ENCODE measurements at regions of chr1 and their contacts with region 1.

Region 1: DNA sequence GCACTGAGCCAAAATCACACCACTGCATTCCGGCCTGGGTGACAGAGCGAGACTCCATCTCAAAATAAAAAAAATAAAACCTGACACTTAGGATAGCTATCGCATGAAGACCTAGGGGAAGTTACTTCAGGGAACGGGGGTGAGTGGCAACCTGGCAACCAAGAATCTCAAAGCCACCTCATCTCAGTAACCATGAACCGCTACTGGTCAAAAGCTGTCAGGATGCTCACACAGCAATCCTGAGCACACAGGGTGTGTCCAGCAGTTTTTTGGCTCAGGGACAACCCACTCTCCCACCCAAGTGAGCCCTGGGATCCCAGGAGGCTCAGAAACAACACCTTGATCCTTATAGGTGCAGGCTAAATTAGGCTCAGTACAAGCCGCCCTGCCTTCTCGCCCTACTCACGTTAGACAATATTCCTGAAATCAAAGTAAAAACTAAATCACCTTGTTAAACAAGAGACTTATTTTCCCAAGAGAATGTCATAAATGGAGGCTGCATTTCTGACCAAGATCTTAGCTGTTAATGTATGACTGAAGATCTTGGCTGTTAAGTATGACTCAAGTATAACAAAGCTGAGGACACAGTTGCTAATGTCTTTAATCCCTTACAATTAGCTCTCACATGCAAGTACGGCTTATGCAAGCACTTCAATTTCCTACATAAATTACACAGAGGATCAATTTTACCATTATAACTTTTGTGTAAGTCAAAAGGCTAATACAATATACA is 48.3 kb upstream of the NADK start:
- DNase-seq: no peak
- H3K4me3 Mint-ChIP-seq: no peak overlapping the region
- H3K27ac Mint-ChIP-seq: peak overlapping the region; percentile 51
- H3K4me1 Mint-ChIP-seq: peaks cover 58% of the 10 kb centered on the region
- H3K27me3 Mint-ChIP-seq: no peaks in the 10 kb centered on the region

Region 2: GRCh38 chr1:1890506-1891348 is 64.2 kb after region 1 on chr1 and contains the start of gene GNB1:
- CTCF ChIA-PET with region 1: interaction called, 3 read pairs
- POLR2A ChIA-PET with region 1: no interaction called
- intact Hi-C with region 1: loop called (anchors 1 kb)
- DNase-seq: peak; percentile 90
- H3K4me3 Mint-ChIP-seq: peak within 1 kb of the TSS; percentile 81
- H3K27ac Mint-ChIP-seq: peak within 1 kb of the TSS; percentile 88
- H3K4me1 Mint-ChIP-seq: peaks cover 49% of the 10 kb centered on the region
- H3K27me3 Mint-ChIP-seq: no peaks in the 10 kb centered on the region
- total RNA-seq, gene GNB1: 396 to 403 TPM